ENCODE measurements at regions of chr1 and their contacts with region 1.

Region 1: GRCh38 chr1:94025383-94026340 is 95.3 kb downstream of the ABCA4 start:
- DNase-seq: peak; percentile 74
- H3K4me3 ChIP-seq: no peak overlapping the region; a peak in 1 of 4 replicates
- H3K27ac ChIP-seq: no peak overlapping the region
- H3K4me1 ChIP-seq: peaks cover 0 to 8% of the 10 kb centered on the region in 2 experiments; a peak in 1 of 4 replicates
- H3K27me3 ChIP-seq: no peaks in the 10 kb centered on the region
- CTCF ChIP-seq: peak; percentile 85
- EP300 ChIP-seq: no peak
- RAD21 ChIP-seq: peak; percentile 86

Region 2: DNA sequence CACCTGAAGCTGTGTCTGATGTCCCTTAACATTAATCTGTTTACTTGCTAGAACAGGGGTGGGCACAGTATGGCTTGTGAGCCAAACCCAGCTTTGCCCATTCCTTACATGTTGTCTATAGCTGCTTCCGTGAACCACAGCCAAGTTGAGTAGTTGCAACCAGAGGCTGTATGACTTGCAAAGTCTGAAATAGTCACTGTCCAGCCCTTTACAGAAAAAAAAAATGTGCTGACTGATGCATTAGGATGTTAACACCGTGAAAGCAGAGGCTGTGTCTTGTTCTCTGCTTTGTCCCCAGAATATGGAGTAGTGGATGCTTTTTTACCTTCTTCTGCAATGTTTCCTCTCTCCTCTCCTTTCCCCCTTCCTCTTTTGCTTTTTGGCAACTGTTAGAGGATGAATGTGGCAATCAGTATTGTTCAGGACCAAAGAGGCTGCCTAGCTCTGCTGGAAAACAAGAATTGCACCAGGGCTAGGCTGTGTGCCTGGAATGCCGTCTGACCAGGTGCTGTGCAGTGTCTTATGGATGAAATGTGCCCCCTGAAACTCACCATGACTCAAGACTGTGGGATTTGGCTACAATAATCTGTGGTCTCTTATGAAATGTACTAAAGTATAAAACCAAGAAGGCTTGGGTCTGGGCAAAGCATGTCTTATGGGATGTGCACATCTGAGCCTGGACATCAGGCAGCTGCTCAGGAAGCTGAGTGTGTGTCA is 36.9 kb before region 1 on chr1:
- CTCF ChIA-PET with region 1: interaction called, 10 read pairs
- POLR2A ChIA-PET with region 1: no interaction called
- DNase-seq: no peak
- H3K4me3 ChIP-seq: no peak overlapping the region
- H3K27ac ChIP-seq: peak overlapping the region in 1 of 2 experiments; percentile 7; a peak in 1 of 4 replicates
- H3K4me1 ChIP-seq: peaks cover 0 to 8% of the 10 kb centered on the region in 2 experiments; a peak in 1 of 4 replicates
- H3K27me3 ChIP-seq: no peaks in the 10 kb centered on the region
- CTCF ChIP-seq: no peak
- EP300 ChIP-seq: no peak; a peak in 1 of 4 replicates
- RAD21 ChIP-seq: no peak

Region 3: GRCh38 chr1:94045465-94046056 is 19.9 kb after region 1 on chr1:
- CTCF ChIA-PET with region 1: interaction called, 321 read pairs
- POLR2A ChIA-PET with region 1: no interaction called
- DNase-seq: peak; percentile 72
- H3K4me3 ChIP-seq: no peak overlapping the region; a peak in 1 of 4 replicates
- H3K27ac ChIP-seq: peak overlapping the region in 1 of 2 experiments; percentile 58; a peak in 3 of 4 replicates
- H3K4me1 ChIP-seq: peaks cover 16 to 21% of the 10 kb centered on the region in 2 experiments; a peak in 3 of 4 replicates
- H3K27me3 ChIP-seq: no peaks in the 10 kb centered on the region
- CTCF ChIP-seq: peak; percentile 81
- EP300 ChIP-seq: peak; percentile 54 to 58; a peak in 3 of 4 replicates
- RAD21 ChIP-seq: peak; percentile 51

Region 4: GRCh38 chr1:94228640-94229375 is 203.1 kb after region 1 on chr1:
- CTCF ChIA-PET with region 1: interaction called, 12 read pairs
- POLR2A ChIA-PET with region 1: no interaction called
- DNase-seq: no peak
- H3K4me3 ChIP-seq: no peak overlapping the region
- H3K27ac ChIP-seq: no peak overlapping the region
- H3K4me1 ChIP-seq: peaks cover 0 to 17% of the 10 kb centered on the region in 2 experiments; a peak in 2 of 4 replicates
- H3K27me3 ChIP-seq: no peaks in the 10 kb centered on the region
- CTCF ChIP-seq: no peak
- EP300 ChIP-seq: no peak
- RAD21 ChIP-seq: no peak

Region 5: DNA sequence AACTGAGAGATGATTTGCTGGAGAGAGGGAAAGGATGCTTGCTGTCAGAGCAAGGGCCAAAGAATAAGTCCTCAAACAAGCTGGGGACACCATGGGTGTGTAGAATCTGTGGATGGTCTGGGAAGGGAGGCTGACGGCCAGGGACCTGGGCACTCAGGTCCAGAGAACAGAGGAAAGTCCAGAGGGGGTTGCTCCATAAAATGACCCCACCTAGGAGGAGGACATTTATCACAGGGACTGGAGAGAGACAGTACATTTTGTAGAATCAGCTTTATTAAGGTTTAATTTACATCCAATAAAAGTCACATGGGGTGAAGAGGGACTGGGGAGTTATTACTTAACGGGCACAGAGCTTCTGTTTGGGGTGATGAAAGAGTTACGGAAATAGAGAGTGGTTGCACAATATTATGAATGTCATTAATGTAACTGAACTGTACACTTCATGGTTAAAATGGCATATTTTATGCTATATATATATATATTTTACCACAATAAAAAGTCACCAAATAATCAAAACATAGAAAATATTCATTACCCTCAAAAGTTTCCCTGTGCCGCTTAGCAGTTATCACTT is 319.6 kb after region 1 on chr1:
- CTCF ChIA-PET with region 1: interaction called, 31 read pairs
- POLR2A ChIA-PET with region 1: no interaction called
- DNase-seq: no peak
- H3K4me3 ChIP-seq: no peak overlapping the region
- H3K27ac ChIP-seq: no peak overlapping the region
- H3K4me1 ChIP-seq: no peaks in the 10 kb centered on the region; a peak in 1 of 4 replicates
- H3K27me3 ChIP-seq: peaks cover 1% of the 10 kb centered on the region; the same call in 1 of the 2 replicates
- CTCF ChIP-seq: no peak
- EP300 ChIP-seq: no peak
- RAD21 ChIP-seq: no peak